AG04450 (cell line): ENCODE measurements at regions of chr3 and their contacts with region 1.

Region 1: DNA sequence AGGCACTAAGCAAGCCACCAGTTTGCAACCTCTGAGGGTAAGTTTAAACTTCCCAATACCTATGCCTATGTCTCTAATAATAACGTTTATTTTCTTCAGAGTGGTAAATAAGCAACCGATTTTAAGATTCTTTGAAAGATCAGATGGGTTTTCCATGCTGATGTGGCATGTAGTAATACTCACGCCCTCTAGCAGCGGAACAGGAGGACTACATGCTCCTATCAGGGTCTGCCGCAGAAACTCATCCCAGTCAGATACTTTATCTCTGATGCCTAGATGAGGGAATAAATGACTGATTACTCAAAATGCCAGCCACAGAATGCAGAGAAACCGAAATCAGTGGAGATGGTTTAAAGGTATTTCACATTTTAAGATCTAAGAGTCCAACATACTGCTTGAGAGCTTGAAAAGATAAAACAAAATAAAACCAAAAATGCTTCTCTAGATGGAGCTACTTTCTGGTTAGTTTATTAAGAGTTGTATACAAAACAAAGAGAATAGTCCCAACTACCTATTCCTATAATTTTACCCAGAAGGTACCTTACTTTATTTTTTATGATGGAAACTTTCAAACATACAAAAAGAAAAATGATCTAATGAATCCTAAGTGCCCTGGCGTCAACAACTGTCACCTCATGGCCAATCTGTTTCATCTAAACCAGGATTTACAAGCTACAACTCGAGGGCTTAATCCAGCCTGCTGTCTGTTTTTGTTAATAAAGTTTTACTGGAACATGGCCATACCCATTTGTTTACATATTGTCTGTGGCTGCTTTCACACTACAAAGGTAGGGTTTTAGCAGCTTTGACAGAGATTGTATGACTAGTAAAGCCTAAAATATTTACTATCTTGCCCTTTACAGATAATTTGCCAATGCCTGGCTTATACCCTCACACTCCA is 37.5 kb upstream of the STIMATE start:
- DNase-seq: peak; percentile 24
- H3K4me3 ChIP-seq: no peak overlapping the region
- H3K27ac ChIP-seq: no peak overlapping the region
- H3K27me3 ChIP-seq: no peaks in the 10 kb centered on the region
- CTCF ChIP-seq: peak; percentile 90

Region 2: DNA sequence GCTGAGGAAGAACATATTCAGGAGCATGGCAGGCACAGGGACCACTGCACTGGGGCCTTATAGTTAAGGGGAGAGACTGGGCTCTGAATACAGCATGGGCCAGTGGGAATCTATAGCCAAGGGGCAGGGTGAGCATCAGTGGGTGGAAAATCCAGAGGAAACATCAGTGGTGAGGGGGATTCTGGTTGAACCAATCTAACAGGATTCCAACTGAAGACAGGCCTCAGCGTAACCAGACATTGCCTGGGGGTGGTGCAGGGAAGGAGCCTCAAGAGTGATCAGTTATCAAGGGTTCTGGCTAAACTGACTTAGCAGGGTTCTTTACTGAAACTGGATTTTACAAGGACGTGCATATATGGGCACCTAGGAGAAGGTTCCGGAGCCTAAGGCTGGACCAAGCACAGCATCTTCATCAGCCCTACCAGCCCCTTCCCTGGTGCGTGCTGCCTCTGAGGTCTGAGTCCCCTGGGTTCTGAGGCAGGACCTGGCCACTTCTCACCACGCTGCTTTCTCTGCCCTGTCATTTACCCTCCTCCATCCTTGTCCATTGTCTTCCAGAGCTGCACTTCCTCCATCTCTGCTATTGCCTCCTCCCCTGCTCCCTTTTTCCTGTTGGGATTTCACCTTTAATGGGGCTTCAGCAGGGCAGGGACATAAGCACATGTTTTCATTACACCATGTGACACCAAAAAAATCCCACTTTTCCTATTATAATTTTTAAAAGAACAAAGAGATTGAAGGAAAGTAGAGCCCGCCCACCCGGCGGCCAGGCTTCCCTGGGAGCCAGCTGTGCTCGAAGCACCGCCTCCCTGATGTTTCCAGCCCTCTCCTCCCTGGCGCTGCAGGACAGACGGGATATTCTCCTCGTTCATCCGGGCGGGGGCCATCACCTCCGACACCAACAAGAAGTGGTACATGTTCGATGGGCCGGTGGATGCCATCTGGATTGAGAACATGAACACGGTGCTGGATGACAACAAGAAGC is 566.7 kb before region 1 on chr3:
- CTCF ChIA-PET with region 1: no interaction called
- POLR2A ChIA-PET with region 1: no interaction called
- DNase-seq: no peak
- H3K4me3 ChIP-seq: no peak overlapping the region
- H3K27ac ChIP-seq: no peak overlapping the region
- H3K27me3 ChIP-seq: peaks cover 5% of the 10 kb centered on the region
- CTCF ChIP-seq: no peak

Region 3: DNA sequence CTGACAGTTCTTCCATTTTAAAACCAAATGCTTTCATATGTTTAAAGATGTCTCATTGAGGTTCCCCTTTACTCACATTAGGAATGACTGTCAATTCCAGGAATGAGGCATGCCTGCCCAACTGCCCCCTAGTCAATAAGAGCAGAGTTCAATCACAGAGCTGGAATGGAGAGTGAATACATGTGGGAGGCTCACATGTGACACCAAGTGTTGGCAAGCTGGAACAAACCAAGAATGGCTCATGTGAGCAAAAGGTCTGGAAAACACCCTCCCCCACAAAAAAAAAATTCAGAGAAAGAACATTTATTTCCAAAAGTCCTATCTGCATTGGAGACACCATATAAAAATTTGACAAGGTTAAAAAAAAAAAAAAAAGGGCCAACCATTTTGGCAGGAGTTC is 252.9 kb before region 1 on chr3:
- CTCF ChIA-PET with region 1: no interaction called
- POLR2A ChIA-PET with region 1: no interaction called
- DNase-seq: no peak
- H3K4me3 ChIP-seq: no peak overlapping the region
- H3K27ac ChIP-seq: no peak overlapping the region
- H3K27me3 ChIP-seq: no peaks in the 10 kb centered on the region
- CTCF ChIP-seq: no peak

Region 4: GRCh38 chr3:52742418-52743041 is 192.3 kb before region 1 on chr3:
- CTCF ChIA-PET with region 1: interaction called, 17 read pairs
- POLR2A ChIA-PET with region 1: no interaction called
- DNase-seq: no peak
- H3K4me3 ChIP-seq: no peak overlapping the region
- H3K27ac ChIP-seq: no peak overlapping the region
- H3K27me3 ChIP-seq: no peaks in the 10 kb centered on the region
- CTCF ChIP-seq: peak; percentile 71

Region 5: DNA sequence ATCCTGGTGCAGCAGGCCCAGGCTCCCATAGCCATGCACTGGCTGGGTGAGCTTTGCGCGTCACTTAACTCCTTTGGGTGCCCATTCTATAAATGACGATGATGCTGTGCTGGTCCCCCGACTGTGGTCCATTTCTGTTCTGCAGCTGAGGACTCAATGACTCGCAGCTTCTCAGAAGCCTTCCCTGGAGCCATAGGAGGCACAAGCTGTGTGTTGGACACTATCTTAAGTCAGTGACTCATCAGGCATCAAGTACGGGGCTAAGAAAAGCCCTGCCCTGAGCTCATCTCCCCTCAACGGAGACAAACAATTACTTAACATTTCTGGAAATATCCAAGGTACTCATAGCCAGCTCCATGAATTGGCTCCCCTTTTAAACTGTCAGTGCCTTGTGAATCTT is 86.3 kb before region 1 on chr3:
- CTCF ChIA-PET with region 1: interaction called, 21 read pairs
- POLR2A ChIA-PET with region 1: no interaction called
- DNase-seq: peak; percentile 49
- H3K4me3 ChIP-seq: no peak overlapping the region
- H3K27ac ChIP-seq: no peak overlapping the region
- H3K27me3 ChIP-seq: no peaks in the 10 kb centered on the region
- CTCF ChIP-seq: no peak

Region 6: DNA sequence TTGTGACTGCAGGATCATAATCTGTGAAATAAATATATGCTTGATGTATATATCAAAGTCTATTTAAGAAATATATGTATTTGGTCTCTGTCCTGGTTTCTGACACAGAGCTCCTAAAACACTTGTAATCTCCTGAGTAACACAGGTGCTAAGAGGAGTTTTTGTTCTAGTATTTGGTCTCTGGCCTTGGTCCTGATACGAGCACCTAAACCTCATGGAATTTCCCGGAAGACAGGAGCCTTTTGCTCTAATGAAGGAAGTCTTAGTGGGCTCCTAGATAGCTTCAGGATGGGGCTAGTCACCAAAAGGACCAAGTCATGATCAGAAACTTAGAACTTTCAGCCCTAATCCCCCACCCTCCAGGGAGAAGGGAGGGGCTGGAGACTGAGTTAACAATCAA is 80.9 kb before region 1 on chr3:
- CTCF ChIA-PET with region 1: interaction called, 21 read pairs
- POLR2A ChIA-PET with region 1: no interaction called
- DNase-seq: no peak
- H3K4me3 ChIP-seq: no peak overlapping the region
- H3K27ac ChIP-seq: peak overlapping the region; percentile 12
- H3K27me3 ChIP-seq: no peaks in the 10 kb centered on the region
- CTCF ChIP-seq: no peak

Region 7: DNA sequence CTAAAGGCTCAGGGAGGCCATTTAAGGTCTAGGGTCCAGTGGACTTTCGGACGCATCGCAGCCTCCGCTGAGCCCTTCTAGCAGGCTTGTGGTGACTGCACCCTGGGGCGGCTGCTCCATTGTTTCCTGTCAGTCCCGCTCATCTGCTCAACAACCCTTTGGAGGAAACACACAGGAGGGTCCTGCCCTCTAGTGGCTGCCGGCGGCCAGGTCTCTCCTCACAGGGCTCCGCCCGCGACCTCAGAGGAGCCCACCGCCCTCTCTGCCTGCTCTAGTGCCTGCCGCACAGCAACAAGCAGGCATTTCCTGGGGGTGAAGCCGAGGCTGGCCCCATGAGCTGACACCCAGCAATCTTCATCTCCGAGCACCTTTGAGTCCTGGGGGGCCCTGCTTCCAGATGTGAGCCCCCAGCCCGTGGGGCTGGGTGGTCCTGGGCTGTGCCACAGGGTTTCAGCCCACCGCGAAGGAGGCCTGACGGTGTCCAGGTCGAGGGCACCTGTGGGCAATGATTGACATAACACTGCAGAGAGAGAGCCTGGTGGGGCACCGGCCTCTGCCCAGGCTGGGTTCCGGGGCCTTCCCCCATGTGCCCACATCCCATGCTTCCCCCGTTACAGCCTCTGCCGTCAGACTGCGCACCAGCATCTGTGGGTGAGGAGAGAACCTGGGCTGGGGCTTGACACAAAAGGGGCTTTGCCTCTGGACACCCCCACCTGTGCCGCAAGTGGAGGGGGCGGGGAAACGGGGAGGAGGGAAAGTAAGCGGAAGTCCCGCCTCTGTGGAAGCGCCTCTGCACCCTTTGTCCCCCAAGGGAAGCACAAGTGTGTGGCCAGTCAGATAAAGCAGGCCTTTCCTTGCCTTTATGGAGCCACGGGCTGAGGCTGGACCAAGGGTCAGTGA is 138.0 kb after region 1 on chr3:
- CTCF ChIA-PET with region 1: interaction called, 11 read pairs
- POLR2A ChIA-PET with region 1: no interaction called
- DNase-seq: peak; percentile 24
- H3K4me3 ChIP-seq: peak overlapping the region; percentile 50
- H3K27ac ChIP-seq: no peak overlapping the region
- H3K27me3 ChIP-seq: no peaks in the 10 kb centered on the region
- CTCF ChIP-seq: peak; percentile 92